HEK293T (cell line): ENCODE measurements at regions of chr14 and their contacts with region 1.

Region 1: GRCh38 chr14:67816326-67817002 is at the start of gene ZFYVE26:
- DNase-seq: peak; percentile 89

Region 2: GRCh38 chr14:67806246-67806645 is 10.2 kb before region 1 on chr14:
- CTCF ChIA-PET with region 1: no interaction called
- POLR2A ChIA-PET with region 1: interaction called, 11 read pairs
- DNase-seq: no peak